Posterior cingulate gyrus (tissue), 11 donors: ENCODE measurements at regions of chr12 and their contacts with region 1.

Region 1: GRCh38 chr12:1939801-1940607 is 21.6 kb upstream of the CACNA2D4 start:
- DNase-seq: peak; percentile 77 to 99 (median 92)

Region 2: DNA sequence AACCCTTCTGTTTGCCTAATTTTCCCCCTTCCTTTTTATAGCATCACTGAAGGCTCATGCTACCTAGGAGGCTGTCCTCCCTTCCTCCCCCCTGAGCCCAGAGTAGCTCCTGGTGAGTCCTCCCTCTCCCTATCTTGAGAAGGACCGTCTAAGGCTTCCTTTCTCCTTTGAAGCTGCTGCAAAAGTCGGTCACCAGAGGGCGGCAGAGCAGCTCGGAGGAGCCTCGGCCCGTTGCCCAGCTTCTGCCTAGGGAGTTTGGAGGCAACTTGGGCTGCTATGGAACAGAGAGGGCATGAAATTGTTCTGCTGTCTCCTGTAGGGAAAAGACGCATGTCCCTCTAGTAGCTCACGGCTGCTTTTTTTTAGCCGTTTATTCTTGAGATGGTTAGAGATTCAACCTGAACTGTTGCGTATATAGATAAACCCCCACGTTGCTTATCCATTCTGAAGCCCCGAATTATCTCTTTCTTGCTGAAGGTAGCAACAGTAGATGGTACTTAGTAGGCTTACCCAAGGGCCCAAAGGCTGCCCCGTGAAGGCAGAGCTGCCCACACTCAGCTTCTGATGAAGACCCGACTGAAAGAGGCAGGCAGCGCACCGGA is 305.3 kb before region 1 on chr12:
- intact Hi-C with region 1: loop called (anchors 5 kb)
- DNase-seq: peak; percentile 74 to 97 (median 89)

Region 3: GRCh38 chr12:1650260-1650977 is 289.6 kb before region 1 on chr12:
- intact Hi-C with region 1: loop called (anchors 2 kb)
- DNase-seq: no peak

Region 4: DNA sequence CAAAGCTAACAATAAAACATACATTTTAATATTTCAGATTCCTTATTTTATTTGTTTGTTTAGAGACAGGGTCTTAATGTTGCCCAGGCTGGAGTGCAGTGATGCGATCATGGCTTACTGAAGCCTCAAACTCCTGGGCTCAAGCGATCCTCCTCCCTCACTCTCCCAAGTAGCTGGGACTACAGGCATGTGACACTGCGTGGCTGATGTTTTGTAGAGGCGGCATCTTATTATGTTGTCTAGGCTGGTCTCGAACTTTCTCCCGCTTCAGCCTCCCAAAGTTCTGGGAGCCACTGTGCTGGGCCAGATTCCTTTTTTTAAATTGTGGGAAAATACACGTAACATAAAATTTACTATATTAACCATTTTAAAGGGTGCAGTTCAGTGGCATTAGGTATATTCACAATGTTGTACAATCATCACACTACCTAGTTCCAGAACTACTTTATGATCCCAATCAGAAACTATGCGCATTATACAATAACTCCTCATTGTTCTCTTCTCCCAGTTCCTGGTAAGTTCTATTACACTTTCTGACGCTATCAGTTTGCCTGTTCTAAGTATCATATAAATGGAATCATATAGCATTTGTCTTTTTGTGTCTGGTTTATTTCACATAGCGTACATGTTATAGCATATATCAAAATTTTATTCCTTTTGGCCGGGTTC is 208.9 kb before region 1 on chr12:
- intact Hi-C with region 1: no loop called
- DNase-seq: no peak

Region 5: GRCh38 chr12:1795785-1796514 is 144.1 kb before region 1 on chr12:
- intact Hi-C with region 1: loop called (anchors 1 kb)
- DNase-seq: peak; percentile 83 to 99 (median 90)

Region 6: DNA sequence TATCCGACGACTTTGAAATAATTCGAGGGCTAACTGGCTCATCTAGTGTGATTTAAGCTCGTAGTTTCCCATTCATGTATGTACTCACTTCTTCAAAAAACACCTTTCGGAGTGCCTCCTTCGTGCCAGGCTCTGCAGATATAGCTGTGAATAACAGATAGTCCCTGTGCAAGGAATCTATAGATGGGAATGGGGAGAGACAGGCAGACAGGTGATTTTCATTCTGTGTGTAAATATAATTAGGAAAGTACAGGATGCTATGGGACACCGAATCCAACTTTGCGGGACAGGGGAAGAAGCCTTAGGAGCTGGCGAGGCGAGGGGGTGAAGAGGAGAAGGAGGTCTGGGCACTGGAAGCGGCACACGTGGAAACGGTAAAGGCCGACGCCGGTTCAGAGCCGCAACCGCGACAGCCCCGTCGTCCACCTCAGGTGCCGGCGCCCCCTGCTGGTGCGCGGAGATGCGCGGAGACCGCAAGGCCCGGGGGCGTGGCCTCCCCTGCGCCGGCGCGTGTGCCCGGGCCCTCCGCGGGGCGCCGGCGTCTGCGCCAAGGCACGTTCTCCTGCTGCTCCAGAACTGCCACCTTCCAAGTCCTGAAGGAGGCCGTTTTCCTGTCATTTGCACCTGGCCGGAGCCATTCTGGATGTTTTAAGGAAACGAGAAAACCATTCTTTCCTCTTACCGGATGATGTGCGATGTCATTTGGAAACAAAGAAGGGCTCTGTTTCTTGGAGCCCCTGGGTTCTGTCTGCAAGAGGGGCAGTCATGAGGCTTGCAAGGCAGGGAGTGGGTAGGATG is 94.8 kb after region 1 on chr12:
- intact Hi-C with region 1: loop called (anchors 10 kb)
- DNase-seq: peak; percentile 74 to 98 (median 90)